Panc1 (cell line): ENCODE measurements at regions of chr1 and their contacts with region 1.

Region 1: DNA sequence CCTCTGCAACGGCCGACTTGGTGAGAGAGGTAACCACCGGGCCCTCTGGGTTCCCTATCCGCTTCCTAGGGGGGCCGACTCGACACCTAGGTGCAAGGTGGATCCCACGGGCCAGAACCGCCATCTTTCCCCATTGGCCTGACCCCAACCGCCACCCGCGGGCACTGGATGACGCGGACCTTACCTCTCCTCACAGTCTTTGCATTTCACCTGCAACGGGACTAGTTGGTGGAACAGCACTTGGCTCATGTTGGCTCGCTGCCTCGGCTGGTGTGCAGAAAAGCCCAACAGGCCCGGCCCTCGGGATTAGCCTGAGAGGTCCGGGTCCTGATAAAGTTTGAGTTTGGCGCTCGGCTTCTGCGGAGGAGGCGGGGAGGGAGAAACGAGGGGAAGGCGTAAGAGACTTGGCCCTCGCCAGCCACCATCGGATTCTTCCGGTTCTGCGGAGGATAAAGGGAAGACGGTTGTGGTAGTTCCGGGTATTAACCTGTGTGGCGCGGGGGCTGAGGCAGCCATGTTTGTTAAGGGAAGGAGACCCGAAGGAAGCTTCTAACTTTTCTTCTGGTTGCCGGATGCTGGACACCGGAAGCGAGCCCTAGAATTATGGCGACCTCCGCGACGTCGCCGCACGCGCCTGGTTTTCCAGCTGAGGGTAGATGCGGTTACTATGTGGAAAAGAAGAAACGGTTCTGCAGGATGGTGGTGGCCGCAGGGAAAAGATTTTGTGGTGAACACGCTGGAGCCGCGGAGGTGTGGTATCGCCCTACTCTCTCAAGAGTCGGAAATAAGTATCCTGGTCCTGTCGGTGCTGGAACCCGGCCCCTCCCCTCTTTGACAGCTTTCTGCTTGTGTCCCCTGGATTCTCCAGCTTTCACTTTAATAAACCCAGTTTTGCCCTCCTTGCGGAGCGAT is at the starts of genes SASS6 and TRMT13:
- DNase-seq: peak; percentile 84
- ATAC-seq: peak; percentile 99
- H3K4me3 ChIP-seq: peak within 1 kb of the TSS; percentile 84 to 86
- H3K27ac ChIP-seq: peak within 1 kb of the TSS; percentile 87
- H3K4me1 ChIP-seq: peaks cover 20% of the 10 kb centered on the region
- H3K27me3 ChIP-seq: no peaks in the 10 kb centered on the region
- CTCF ChIP-seq: no peak
- total RNA-seq, gene SASS6: 6.2 TPM
- total RNA-seq, gene TRMT13: 6.2 TPM

Region 2: DNA sequence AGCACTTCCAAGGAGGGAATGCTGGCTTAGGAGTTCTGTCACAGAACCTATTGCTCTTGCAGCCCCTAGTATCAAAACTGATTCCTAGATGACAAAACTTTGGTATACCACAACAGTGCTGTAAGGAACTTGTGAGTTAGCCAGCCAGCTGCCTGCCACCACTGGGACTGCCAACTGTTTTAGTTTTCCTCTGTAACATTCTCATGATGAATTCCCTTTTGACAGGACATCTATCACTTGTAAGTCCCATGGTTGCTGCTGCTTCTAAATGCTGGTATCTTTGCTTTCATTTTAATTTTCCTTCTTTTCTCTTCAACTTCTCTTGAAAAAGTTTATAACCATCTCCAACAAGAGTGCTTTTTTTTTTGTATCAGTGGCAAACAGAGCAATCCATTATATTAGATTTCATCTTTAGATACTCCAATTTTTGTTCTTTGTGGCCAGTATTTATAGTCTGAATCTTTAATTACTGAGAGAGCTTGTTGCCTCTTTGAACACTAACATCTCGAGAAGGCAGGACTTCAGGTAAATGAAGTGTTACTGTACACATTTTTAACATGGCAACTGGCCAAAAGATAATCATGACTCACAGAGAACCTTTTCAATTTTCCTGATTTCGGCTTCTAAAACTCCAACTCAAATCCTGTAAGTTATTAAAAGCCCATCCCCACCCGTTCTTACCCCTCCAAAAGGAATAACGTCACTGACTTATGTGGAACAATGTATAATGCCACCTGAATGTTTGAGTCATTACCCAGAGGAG is 97.0 kb after region 1 on chr1:
- CTCF ChIA-PET with region 1: interaction called, 4 read pairs
- POLR2A ChIA-PET with region 1: interaction called, 10 read pairs
- in situ Hi-C with region 1: no loop called
- intact Hi-C with region 1: no loop called
- DNase-seq: no peak
- ATAC-seq: no peak
- H3K4me3 ChIP-seq: no peak overlapping the region
- H3K27ac ChIP-seq: no peak overlapping the region
- H3K4me1 ChIP-seq: no peaks in the 10 kb centered on the region
- H3K27me3 ChIP-seq: no peaks in the 10 kb centered on the region
- CTCF ChIP-seq: no peak